ENCODE measurements at regions of chr13 and their contacts with region 1.

Region 1: GRCh38 chr13:110455941-110456340 is 105.6 kb downstream of the RAB20 start:
- DNase-seq: peak; percentile 78 to 83
- H3K4me3 ChIP-seq: no peak overlapping the region
- H3K27ac ChIP-seq: no peak overlapping the region
- H3K4me1 ChIP-seq: peaks cover 26% of the 10 kb centered on the region
- H3K27me3 ChIP-seq: no peaks in the 10 kb centered on the region
- CTCF ChIP-seq: peak; percentile 96

Region 2: DNA sequence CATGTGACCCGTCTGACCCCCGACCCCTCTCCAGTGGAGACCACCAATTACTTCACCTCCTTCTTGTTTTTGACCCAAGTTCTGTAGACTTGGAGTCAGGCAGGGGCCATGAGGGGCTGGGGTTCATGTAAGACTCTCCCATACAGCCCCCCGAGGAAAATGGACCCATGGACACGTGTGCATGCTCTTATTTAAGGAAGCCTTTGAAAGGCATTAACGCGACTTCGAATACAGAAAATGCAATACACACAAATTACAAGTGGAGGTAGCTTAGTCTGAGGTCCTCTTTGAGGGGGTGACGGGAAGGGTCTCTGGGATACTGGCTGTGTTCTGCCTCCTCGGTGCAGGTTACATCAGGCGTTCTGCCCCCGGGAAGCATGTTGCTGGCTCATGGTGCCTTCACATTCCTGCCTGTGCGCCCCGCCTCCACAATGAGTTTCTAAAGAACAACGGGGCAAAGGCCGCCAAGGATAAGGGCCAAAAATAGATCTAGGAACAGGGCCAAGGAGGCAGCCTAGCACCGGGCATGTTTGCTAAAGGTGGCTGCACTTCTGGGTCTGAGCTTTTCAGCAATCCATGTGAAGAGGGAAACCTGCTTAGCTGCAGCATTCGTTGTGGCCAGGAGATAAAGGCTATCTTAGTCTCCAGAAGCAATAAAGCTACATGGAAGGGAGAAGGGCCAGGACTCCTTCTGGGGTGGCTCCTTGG is 51.1 kb after region 1 on chr13:
- CTCF ChIA-PET with region 1: interaction called, 4 read pairs
- POLR2A ChIA-PET with region 1: no interaction called
- intact Hi-C with region 1: loop called (anchors 1 kb)
- DNase-seq: peak; percentile 77 to 93
- H3K4me3 ChIP-seq: peak overlapping the region; percentile 36; the same call in 1 of the 2 replicates
- H3K27ac ChIP-seq: peak overlapping the region; percentile 84
- H3K4me1 ChIP-seq: peaks cover 27% of the 10 kb centered on the region
- H3K27me3 ChIP-seq: no peaks in the 10 kb centered on the region
- CTCF ChIP-seq: no peak

Region 3: GRCh38 chr13:110561344-110562035 is 105.5 kb after region 1 on chr13 and contains the start of gene RAB20:
- CTCF ChIA-PET with region 1: interaction called, 3 read pairs
- POLR2A ChIA-PET with region 1: no interaction called
- intact Hi-C with region 1: loop called (anchors 1 kb)
- DNase-seq: peak; percentile 73 to 78
- H3K4me3 ChIP-seq: peak within 1 kb of the TSS; percentile 91
- H3K27ac ChIP-seq: peak within 1 kb of the TSS; percentile 72
- H3K4me1 ChIP-seq: peaks cover 58% of the 10 kb centered on the region
- H3K27me3 ChIP-seq: no peaks in the 10 kb centered on the region
- CTCF ChIP-seq: no peak
- total RNA-seq, gene RAB20: 31.9 and 41.0 TPM in 2 replicates

Region 4: GRCh38 chr13:110575322-110576069 is 119.6 kb after region 1 on chr13:
- CTCF ChIA-PET with region 1: no interaction called
- POLR2A ChIA-PET with region 1: no interaction called
- intact Hi-C with region 1: loop called (anchors 5 kb)
- DNase-seq: peak; percentile 29 to 50
- H3K4me3 ChIP-seq: no peak overlapping the region
- H3K27ac ChIP-seq: no peak overlapping the region
- H3K4me1 ChIP-seq: peaks cover 8% of the 10 kb centered on the region
- H3K27me3 ChIP-seq: no peaks in the 10 kb centered on the region
- CTCF ChIP-seq: no peak

Region 5: GRCh38 chr13:110593430-110594130 is 137.6 kb after region 1 on chr13:
- CTCF ChIA-PET with region 1: interaction called, 4 read pairs
- POLR2A ChIA-PET with region 1: no interaction called
- intact Hi-C with region 1: loop called (anchors 1 kb)
- DNase-seq: peak in 1 of 2 experiments; percentile 59
- H3K4me3 ChIP-seq: no peak overlapping the region
- H3K27ac ChIP-seq: no peak overlapping the region
- H3K4me1 ChIP-seq: peaks cover 33% of the 10 kb centered on the region
- H3K27me3 ChIP-seq: no peaks in the 10 kb centered on the region
- CTCF ChIP-seq: peak; percentile 78

Region 6: DNA sequence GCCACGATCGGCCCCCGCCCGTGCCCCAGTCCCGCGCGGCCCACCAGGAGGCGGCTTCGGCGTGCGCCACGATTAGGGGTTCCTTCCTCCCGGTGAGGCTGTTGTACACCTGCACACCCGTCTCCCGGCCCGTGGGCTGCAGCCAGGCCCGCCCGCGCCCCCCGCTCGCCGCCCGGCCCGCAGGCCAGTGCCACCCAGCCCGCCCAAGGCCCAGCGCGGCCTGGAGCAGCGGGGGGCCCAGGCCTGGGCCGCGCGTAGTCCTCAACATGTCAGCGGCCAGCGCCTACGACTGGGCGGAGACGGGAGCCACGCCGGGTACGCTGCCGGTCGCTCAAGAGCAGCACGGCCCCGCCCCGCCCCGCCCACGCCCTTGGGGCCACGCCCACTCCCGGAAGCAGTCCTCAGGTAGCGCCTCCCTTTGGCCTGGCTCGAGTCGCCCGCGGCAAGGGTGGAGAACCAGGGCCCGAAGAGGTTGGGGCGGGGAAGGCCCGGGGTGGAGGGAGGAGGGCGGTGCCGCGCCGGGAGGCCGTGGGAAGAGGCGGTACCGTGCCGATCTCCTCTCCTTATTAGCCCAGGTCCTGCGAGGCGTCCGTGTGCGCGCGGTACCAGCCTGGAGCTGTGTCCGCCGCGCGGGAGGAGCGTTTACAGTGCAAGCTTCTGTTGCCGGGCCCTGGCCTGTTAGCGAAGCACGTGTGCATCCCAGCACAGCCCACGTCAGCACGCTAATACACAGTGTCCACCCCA is 250.1 kb after region 1 on chr13 and contains the start of gene CARS2:
- CTCF ChIA-PET with region 1: no interaction called
- POLR2A ChIA-PET with region 1: interaction called, 3 read pairs
- intact Hi-C with region 1: loop called (anchors 5 kb)
- DNase-seq: peak; percentile 95 to 96
- H3K4me3 ChIP-seq: peak within 1 kb of the TSS; percentile 82
- H3K27ac ChIP-seq: peak within 1 kb of the TSS; percentile 93
- H3K4me1 ChIP-seq: peaks cover 29% of the 10 kb centered on the region
- H3K27me3 ChIP-seq: no peaks in the 10 kb centered on the region
- CTCF ChIP-seq: no peak
- total RNA-seq, gene CARS2: 57.1 and 67.0 TPM in 2 replicates

Region 7: DNA sequence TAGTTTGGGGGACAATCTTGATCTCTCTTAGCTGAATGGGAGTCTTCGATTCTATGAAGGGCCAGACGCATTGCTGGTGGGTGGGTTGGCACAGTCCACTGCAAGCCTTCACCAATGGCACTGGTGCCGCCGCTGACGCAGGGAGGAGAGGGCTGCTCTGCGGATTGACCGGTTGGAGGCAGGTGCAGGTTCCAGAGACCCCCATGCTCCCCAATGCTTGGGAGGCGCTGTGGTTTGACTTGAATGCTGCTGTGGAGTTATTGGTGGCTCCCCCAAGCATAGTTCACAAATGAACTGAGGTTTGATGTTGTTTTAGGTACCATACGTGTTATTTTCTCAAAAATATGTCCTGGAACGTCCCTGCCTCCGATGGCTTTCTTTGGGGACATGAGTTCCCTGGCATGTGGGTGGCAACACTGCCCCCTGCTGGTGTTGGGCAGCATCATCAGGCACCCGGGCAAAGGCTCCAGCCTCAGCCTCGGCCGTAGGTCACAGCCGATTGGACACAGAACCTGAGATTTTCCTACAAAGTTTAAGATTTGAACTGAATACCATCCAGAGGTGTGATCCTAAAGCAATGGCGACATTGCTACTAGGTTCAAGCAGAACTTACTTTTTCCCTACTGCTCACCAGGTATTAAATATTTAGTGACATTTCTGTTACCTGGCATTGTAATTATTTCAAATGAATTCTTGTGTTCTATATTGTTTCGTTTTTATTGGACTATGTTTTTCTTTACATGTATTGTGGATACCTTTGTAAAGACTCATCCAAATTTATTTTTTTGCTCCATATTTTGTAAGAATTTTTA is 363.5 kb after region 1 on chr13:
- CTCF ChIA-PET with region 1: no interaction called
- POLR2A ChIA-PET with region 1: no interaction called
- intact Hi-C with region 1: loop called (anchors 1 kb)
- DNase-seq: peak; percentile 62 to 72
- H3K4me3 ChIP-seq: no peak overlapping the region
- H3K27ac ChIP-seq: no peak overlapping the region
- H3K4me1 ChIP-seq: peaks cover 18% of the 10 kb centered on the region; the same call in 1 of the 2 replicates
- H3K27me3 ChIP-seq: no peaks in the 10 kb centered on the region
- CTCF ChIP-seq: peak; percentile 99

Measured in PC-9 (cell line).